Activated B cell treated with CpG ODN at 0.5 μM for 24 hours (primary cell): ENCODE measurements at regions of chr16 and their contacts with region 1.

Region 1: GRCh38 chr16:30183233-30184095 is at the start of gene CORO1A:
- DNase-seq: peak; percentile 86
- ATAC-seq: peak; percentile 60
- H3K4me3 Mint-ChIP-seq: peak within 1 kb of the TSS; percentile 98
- H3K27ac Mint-ChIP-seq: peak within 1 kb of the TSS; percentile 97
- H3K4me1 Mint-ChIP-seq: peaks cover 41% of the 10 kb centered on the region
- H3K27me3 Mint-ChIP-seq: no peaks in the 10 kb centered on the region
- CTCF ChIP-seq: no peak
- total RNA-seq, gene CORO1A: 1,030 and 1,060 TPM in 2 replicates

Region 2: DNA sequence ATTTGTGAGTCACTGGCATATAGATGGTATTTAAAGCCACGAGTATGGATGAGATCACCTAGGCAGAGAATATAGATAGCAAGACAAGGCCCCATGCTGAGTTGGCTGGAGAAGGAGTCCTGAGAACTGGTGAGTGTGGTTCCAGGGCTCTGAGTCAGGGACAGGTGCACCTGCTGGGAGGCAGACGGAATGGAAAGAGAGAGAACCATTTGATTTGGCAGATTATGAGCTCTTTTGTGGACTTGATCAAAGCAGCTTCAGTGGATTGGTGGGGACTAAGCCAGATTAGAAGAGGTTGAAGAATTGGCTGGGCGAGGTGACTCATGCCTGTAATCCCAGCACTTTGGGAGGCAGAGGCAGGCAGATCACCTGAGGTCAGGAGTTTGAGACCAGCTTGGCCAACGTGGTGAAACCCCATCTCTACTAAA is 164.7 kb before region 1 on chr16:
- CTCF ChIA-PET with region 1: no interaction called
- POLR2A ChIA-PET with region 1: no interaction called
- intact Hi-C with region 1: no loop called
- DNase-seq: no peak
- ATAC-seq: no peak
- H3K4me3 Mint-ChIP-seq: no peak overlapping the region
- H3K27ac Mint-ChIP-seq: no peak overlapping the region
- H3K4me1 Mint-ChIP-seq: peaks cover 11% of the 10 kb centered on the region
- H3K27me3 Mint-ChIP-seq: no peaks in the 10 kb centered on the region
- CTCF ChIP-seq: no peak

Region 3: DNA sequence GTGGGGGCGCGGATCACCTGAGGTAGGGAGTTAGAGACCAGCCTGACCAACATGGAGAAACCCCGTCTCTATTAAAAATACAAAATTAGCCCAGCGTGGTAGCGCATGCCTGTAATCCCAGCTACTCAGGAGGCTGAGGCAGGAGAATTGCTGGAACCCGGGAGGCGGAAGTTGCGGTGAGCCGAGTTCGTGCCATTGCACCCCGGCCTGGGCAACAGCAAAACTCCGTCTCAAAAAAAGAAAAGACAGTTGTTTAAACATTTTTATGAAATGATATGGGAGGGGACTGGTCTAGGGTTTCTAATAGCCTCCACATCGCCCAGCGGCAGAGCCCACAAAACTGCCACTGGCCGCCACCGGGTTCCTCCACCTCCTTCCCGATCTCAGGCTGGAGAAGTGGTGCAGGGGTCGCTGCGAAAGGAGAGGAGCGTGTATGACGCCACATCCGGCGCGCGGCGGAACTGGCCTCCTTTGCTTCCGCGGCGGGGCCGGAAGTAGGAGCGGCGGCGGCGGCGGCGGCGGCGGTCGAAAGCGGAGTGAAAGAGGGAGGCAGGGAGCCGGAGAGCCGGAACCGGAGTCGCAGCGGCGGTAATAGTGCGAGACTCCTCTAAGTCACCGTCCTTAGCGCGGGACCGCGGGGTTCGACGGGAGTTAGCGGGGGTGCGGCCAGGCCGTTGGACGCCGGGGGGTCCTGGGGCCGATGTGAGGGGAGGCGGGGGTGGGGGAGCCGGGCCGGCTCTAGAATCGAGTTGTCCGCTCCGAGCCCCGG is 107.8 kb before region 1 on chr16 and contains the start of gene PPP4C:
- CTCF ChIA-PET with region 1: no interaction called
- POLR2A ChIA-PET with region 1: interaction called, 24 read pairs
- intact Hi-C with region 1: no loop called
- DNase-seq: peak; percentile 86
- ATAC-seq: peak; percentile 86
- H3K4me3 Mint-ChIP-seq: peak within 1 kb of the TSS; percentile 94
- H3K27ac Mint-ChIP-seq: peak within 1 kb of the TSS; percentile 91
- H3K4me1 Mint-ChIP-seq: peaks cover 35% of the 10 kb centered on the region
- H3K27me3 Mint-ChIP-seq: no peaks in the 10 kb centered on the region
- CTCF ChIP-seq: no peak
- total RNA-seq, gene PPP4C: 124 and 131 TPM in 2 replicates

Region 4: DNA sequence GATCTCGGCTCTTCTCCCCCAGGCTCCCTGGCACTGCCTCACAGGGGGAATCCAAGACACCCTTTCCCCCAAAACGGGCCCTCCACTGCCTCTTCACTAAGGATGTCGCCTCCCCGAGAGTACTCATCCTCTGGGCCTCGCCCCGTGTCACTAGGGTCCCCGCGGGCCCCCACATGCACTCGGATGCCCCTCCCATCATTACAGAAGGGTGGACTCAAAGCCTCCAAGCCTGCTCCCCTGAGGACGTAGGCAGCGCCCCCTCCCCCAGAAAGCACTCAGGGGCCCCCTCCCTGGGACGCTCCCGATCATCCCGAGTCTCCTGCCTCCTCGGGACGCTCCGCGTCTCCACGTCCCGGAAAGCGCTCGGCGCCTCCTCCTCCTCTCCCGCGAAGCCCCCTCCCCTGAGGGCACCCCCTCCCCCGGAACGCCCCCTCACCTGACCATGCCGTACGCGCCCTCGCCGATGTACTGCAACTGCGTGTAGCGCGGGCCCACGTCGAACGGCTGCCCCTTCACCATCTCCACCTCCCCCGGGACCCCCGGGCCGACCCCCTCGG is 60.8 kb before region 1 on chr16:
- CTCF ChIA-PET with region 1: no interaction called
- POLR2A ChIA-PET with region 1: interaction called, 26 read pairs
- intact Hi-C with region 1: loop called (anchors 1 kb)
- DNase-seq: peak; percentile 21
- ATAC-seq: peak; percentile 5
- H3K4me3 Mint-ChIP-seq: peak overlapping the region; percentile 86
- H3K27ac Mint-ChIP-seq: peak overlapping the region; percentile 76
- H3K4me1 Mint-ChIP-seq: peaks cover 22% of the 10 kb centered on the region
- H3K27me3 Mint-ChIP-seq: no peaks in the 10 kb centered on the region
- CTCF ChIP-seq: no peak

Region 5: DNA sequence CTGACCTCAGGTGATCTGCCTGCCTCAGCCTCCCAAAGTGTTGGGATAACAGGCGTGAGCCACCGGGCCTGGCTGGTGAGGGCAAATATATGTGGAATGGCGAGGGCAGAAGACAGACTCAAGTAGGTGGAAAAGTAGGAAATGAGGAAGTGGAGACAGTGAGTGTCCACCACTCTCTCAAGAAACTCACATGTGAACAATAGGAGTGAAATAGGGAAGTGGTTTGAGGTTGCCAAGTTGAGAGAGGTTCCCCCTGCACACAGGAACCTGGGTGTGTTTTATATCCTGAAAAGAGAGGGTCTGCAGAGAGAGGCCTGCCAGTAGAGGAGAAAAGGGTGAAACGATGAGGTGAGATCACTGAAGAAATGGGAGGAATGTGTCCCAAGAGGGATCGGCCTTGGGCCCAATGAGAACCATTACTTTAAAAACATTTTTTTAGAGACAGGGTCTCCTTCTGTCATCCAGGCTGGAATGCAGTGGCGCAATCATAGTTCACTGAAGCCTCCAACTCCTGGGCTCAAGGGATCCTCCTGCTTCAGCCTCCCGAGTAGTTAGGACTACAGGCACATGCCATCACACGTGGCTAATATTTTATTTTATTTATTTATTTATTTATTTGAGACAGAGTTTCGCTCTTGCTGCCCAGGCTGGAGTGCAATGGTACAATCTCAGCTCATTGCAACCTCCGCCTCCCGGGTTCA is 17.1 kb before region 1 on chr16:
- CTCF ChIA-PET with region 1: no interaction called
- POLR2A ChIA-PET with region 1: interaction called, 12 read pairs
- intact Hi-C with region 1: no loop called
- DNase-seq: no peak
- ATAC-seq: peak; percentile 97
- H3K4me3 Mint-ChIP-seq: peak overlapping the region; percentile 7
- H3K27ac Mint-ChIP-seq: peak overlapping the region; percentile 70
- H3K4me1 Mint-ChIP-seq: peaks cover 26% of the 10 kb centered on the region
- H3K27me3 Mint-ChIP-seq: no peaks in the 10 kb centered on the region
- CTCF ChIP-seq: no peak

Region 6: DNA sequence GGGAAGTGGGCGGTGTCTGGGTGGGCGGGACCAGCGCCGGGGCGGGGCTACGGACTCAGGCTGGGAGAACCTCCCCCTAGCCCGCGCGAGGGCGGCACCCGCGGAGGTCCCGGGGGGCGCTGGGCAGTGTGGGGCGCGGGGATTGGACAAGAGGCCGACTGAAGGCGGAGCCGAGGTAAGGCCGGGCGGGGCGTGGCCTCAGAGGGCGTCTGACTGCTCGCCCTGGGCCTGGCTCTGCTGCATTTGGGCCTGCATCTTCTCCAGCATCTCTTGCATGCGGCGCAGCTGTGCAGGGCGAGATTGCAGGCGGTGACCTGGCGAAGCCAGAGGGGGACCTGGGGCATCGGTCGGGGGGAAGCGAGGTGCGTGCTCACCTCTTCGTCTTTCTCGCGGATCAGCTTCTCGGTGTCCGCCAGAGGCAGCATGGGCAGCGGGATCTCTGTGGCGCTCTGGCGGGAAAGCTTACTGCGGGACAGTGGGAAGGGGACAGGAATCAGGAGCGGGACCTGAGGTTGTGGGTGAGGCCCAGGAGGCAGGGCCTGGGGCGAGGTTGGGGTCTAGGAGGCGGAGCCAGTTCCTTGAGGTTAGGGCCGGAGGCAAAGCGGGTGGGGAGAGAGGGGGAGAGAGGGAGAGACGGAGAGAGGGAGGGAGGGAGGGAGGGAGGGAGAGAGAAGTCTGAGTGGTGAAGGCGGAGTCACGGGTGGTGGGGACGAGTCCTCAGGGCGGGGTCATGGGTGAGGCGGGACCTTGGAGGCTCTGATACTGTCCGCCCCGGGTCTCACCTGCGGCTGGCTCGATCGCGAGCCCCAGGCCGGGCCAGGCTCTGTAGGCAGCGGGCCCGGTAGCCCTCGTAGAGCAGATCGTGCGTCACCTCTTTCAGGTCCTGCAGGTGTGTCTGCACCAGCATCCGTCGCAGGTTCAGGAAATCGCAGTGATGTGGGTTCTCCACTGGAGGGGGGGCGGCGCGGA is 195.1 kb after region 1 on chr16:
- CTCF ChIA-PET with region 1: no interaction called
- POLR2A ChIA-PET with region 1: interaction called, 10 read pairs
- intact Hi-C with region 1: no loop called
- DNase-seq: peak; percentile 99
- ATAC-seq: peak; percentile 88
- H3K4me3 Mint-ChIP-seq: peak overlapping the region; percentile 92
- H3K27ac Mint-ChIP-seq: peak overlapping the region; percentile 100
- H3K4me1 Mint-ChIP-seq: peaks cover 62% of the 10 kb centered on the region
- H3K27me3 Mint-ChIP-seq: no peaks in the 10 kb centered on the region
- CTCF ChIP-seq: no peak

Region 7: GRCh38 chr16:30902029-30902972 is 718.8 kb after region 1 on chr16:
- CTCF ChIA-PET with region 1: no interaction called
- POLR2A ChIA-PET with region 1: no interaction called
- intact Hi-C with region 1: no loop called
- DNase-seq: peak; percentile 77
- ATAC-seq: peak; percentile 78
- H3K4me3 Mint-ChIP-seq: peak overlapping the region; percentile 95
- H3K27ac Mint-ChIP-seq: peak overlapping the region; percentile 95
- H3K4me1 Mint-ChIP-seq: peaks cover 31% of the 10 kb centered on the region
- H3K27me3 Mint-ChIP-seq: no peaks in the 10 kb centered on the region
- CTCF ChIP-seq: no peak